CD14-positive monocyte (primary cell): ENCODE measurements at regions of chr7 and their contacts with region 1.

Region 1: GRCh38 chr7:141884539-141885225 is 31.5 kb upstream of the OR9A4 start:
- DNase-seq: peak; percentile 72 to 94 (median 90)
- H3K4me3 ChIP-seq: peak overlapping the region in 1 of 3 experiments; percentile 15
- H3K4me3 Mint-ChIP-seq: peak overlapping the region in 1 of 2 donors; percentile 62
- H3K27ac ChIP-seq: peak overlapping the region; percentile 39 to 74
- H3K27ac Mint-ChIP-seq: peak overlapping the region; percentile 83 to 92 (median 91)
- H3K4me1 ChIP-seq: peaks cover 38 to 39% of the 10 kb centered on the region in 2 donors
- H3K4me1 Mint-ChIP-seq: peaks cover 45% of the 10 kb centered on the region
- H3K27me3 ChIP-seq: no peaks in the 10 kb centered on the region
- H3K27me3 Mint-ChIP-seq: peaks cover 0 to 2% (median 1%) of the 10 kb centered on the region in 3 donors
- CTCF ChIP-seq: no peak

Region 2: DNA sequence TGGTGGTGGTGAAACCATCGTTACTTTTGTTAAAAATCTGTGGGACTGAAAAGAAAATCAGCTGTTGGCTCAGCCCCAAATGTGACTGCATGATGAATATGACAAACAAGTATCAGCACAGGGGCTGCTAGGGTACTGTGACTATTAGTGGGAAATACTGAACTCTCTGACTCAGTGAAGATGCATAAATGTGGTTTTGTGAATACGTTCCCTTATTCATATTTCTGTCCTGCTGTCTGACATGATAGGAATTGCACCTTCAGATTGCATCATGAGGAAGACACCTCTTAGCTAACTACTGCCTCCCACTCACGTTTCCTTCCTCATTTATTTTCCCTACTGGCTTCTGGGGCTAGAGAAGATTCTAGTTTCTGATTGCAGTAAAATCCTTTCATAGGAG is 60.7 kb after region 1 on chr7:
- intact Hi-C with region 1: loop called in 1 of 2 experiments (anchors 5 kb)
- DNase-seq: peak; percentile 93 to 99 (median 99)
- H3K4me3 ChIP-seq: peak overlapping the region; percentile 4 to 61 (median 19)
- H3K4me3 Mint-ChIP-seq: peak overlapping the region; percentile 45 to 71
- H3K27ac ChIP-seq: peak overlapping the region; percentile 38 to 89
- H3K27ac Mint-ChIP-seq: peak overlapping the region; percentile 96 to 99 (median 98)
- H3K4me1 ChIP-seq: peaks cover 58 to 74% of the 10 kb centered on the region in 2 donors
- H3K4me1 Mint-ChIP-seq: peaks cover 64% of the 10 kb centered on the region
- H3K27me3 ChIP-seq: no peaks in the 10 kb centered on the region
- H3K27me3 Mint-ChIP-seq: no peaks in the 10 kb centered on the region
- CTCF ChIP-seq: no peak

Region 3: GRCh38 chr7:141960687-141961422 is 76.2 kb after region 1 on chr7:
- intact Hi-C with region 1: loop called (anchors 5 kb)
- DNase-seq: peak; percentile 79 to 93 (median 91)
- H3K4me3 ChIP-seq: peak overlapping the region in 1 of 3 experiments; percentile 42
- H3K4me3 Mint-ChIP-seq: peak overlapping the region; percentile 47 to 67
- H3K27ac ChIP-seq: peak overlapping the region; percentile 63 to 84
- H3K27ac Mint-ChIP-seq: peak overlapping the region; percentile 91 to 98 (median 96)
- H3K4me1 ChIP-seq: peaks cover 45 to 64% of the 10 kb centered on the region in 2 donors
- H3K4me1 Mint-ChIP-seq: peaks cover 55% of the 10 kb centered on the region
- H3K27me3 ChIP-seq: no peaks in the 10 kb centered on the region
- H3K27me3 Mint-ChIP-seq: peaks cover 0 to 3% (median 2%) of the 10 kb centered on the region in 3 donors
- CTCF ChIP-seq: no peak

Region 4: GRCh38 chr7:142196066-142196840 is 311.6 kb after region 1 on chr7:
- intact Hi-C with region 1: no loop called
- DNase-seq: no peak
- H3K4me3 ChIP-seq: no peak overlapping the region
- H3K4me3 Mint-ChIP-seq: no peak overlapping the region
- H3K27ac ChIP-seq: no peak overlapping the region
- H3K27ac Mint-ChIP-seq: no peak overlapping the region
- H3K4me1 ChIP-seq: no peaks in the 10 kb centered on the region
- H3K4me1 Mint-ChIP-seq: no peaks in the 10 kb centered on the region
- H3K27me3 ChIP-seq: peaks cover 0 to 4% of the 10 kb centered on the region in 2 donors
- H3K27me3 Mint-ChIP-seq: peaks cover 11 to 16% (median 12%) of the 10 kb centered on the region in 3 donors
- CTCF ChIP-seq: no peak

Region 5: GRCh38 chr7:142602756-142603155 is 718.1 kb after region 1 on chr7:
- intact Hi-C with region 1: no loop called
- DNase-seq: no peak
- H3K4me3 ChIP-seq: no peak overlapping the region
- H3K4me3 Mint-ChIP-seq: no peak overlapping the region
- H3K27ac ChIP-seq: no peak overlapping the region
- H3K27ac Mint-ChIP-seq: peak overlapping the region in 1 of 7 donors; percentile 64
- H3K4me1 ChIP-seq: no peaks in the 10 kb centered on the region
- H3K4me1 Mint-ChIP-seq: peaks cover 15% of the 10 kb centered on the region
- H3K27me3 ChIP-seq: no peaks in the 10 kb centered on the region
- H3K27me3 Mint-ChIP-seq: peaks cover 0 to 2% (median 1%) of the 10 kb centered on the region in 3 donors
- CTCF ChIP-seq: no peak

Region 6: GRCh38 chr7:143892527-143893300 is 2008.0 kb after region 1 on chr7:
- intact Hi-C with region 1: no loop called
- DNase-seq: no peak
- H3K4me3 ChIP-seq: no peak overlapping the region
- H3K4me3 Mint-ChIP-seq: no peak overlapping the region
- H3K27ac ChIP-seq: no peak overlapping the region
- H3K27ac Mint-ChIP-seq: no peak overlapping the region
- H3K4me1 ChIP-seq: no peaks in the 10 kb centered on the region
- H3K4me1 Mint-ChIP-seq: no peaks in the 10 kb centered on the region
- H3K27me3 ChIP-seq: no peaks in the 10 kb centered on the region
- H3K27me3 Mint-ChIP-seq: no peaks in the 10 kb centered on the region
- CTCF ChIP-seq: no peak